IMR-90 (cell line): ENCODE measurements at regions of chr11 and their contacts with region 1.

Region 1: GRCh38 chr11:87819151-87819550 is 356.1 kb downstream of the RAB38 start:
- DNase-seq: no peak
- ATAC-seq: no peak
- H3K4me3 ChIP-seq: no peak overlapping the region
- H3K27ac ChIP-seq: no peak overlapping the region
- H3K4me1 ChIP-seq: no peaks in the 10 kb centered on the region
- H3K27me3 ChIP-seq: no peaks in the 10 kb centered on the region
- CTCF ChIP-seq: no peak
- POLR2A ChIP-seq: no peak
- RAD21 ChIP-seq: no peak

Region 2: DNA sequence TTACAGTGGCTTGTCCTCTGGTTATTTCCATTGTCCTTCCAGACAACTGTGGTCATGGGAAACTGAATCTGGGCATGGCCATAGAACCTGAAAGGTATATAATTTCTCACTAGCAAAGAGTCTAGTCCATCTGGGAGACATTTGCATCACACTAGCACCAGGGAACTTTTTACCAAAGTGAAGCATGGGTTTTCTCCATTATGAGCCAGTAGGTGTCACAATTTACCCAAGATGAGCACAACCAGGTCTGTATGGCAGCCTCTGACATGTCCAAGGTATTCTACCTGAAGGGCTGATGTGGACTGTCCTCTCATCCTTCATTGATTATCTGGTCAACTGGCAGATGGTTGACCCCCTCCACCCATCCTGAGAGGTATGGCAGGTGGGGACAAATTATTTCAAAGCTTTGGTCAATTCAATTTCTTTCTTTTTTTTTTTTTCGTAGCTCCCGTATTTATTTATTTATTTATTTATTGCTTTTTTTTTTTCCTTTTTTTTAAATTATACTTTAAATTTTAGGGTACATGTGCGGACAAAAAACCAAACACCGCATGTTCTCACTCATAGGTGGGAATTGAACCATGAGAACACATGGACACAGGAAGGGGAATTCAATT is 355.6 kb before region 1 on chr11:
- CTCF ChIA-PET with region 1: no interaction called
- POLR2A ChIA-PET with region 1: no interaction called
- dilution Hi-C with region 1: no loop called
- in situ Hi-C with region 1: no loop called
- intact Hi-C with region 1: loop called (anchors 10 kb)
- DNase-seq: peak; percentile 36
- ATAC-seq: 0 out of 2 replicates have a peak, but pooled peaks have one; percentile 51
- H3K4me3 ChIP-seq: no peak overlapping the region
- H3K27ac ChIP-seq: no peak overlapping the region
- H3K4me1 ChIP-seq: no peaks in the 10 kb centered on the region
- H3K27me3 ChIP-seq: no peaks in the 10 kb centered on the region
- CTCF ChIP-seq: peak; percentile 47
- POLR2A ChIP-seq: no peak
- RAD21 ChIP-seq: peak; percentile 60

Region 3: GRCh38 chr11:87754685-87755084 is 64.5 kb before region 1 on chr11:
- CTCF ChIA-PET with region 1: no interaction called
- POLR2A ChIA-PET with region 1: no interaction called
- dilution Hi-C with region 1: no loop called
- in situ Hi-C with region 1: no loop called
- intact Hi-C with region 1: no loop called
- DNase-seq: no peak
- ATAC-seq: no peak
- H3K4me3 ChIP-seq: no peak overlapping the region
- H3K27ac ChIP-seq: no peak overlapping the region
- H3K4me1 ChIP-seq: no peaks in the 10 kb centered on the region
- H3K27me3 ChIP-seq: no peaks in the 10 kb centered on the region
- CTCF ChIP-seq: no peak
- POLR2A ChIP-seq: no peak
- RAD21 ChIP-seq: no peak

Region 4: DNA sequence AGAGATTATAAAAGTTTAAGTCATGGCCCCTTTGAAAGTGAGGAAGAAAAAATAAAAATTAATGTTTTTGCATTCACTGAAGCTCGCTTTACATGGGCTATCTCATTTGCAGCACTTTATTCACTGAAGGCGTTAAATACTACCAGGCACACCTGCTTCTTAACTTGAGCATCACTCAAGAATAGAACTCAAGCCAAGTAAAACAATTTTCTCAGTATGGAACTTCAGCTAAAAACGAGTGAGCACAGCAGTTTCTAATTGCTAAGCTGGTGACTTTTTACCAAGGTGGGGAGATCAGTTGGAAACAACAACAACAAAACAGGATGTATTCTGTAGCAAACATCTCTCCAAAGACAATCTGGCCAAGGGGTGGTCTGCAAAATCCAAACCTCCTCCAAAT is 49.5 kb before region 1 on chr11:
- CTCF ChIA-PET with region 1: no interaction called
- POLR2A ChIA-PET with region 1: no interaction called
- dilution Hi-C with region 1: no loop called
- in situ Hi-C with region 1: no loop called
- intact Hi-C with region 1: loop called (anchors 5 kb)
- DNase-seq: no peak
- ATAC-seq: no peak
- H3K4me3 ChIP-seq: no peak overlapping the region
- H3K27ac ChIP-seq: no peak overlapping the region
- H3K4me1 ChIP-seq: no peaks in the 10 kb centered on the region
- H3K27me3 ChIP-seq: no peaks in the 10 kb centered on the region
- CTCF ChIP-seq: no peak
- POLR2A ChIP-seq: no peak
- RAD21 ChIP-seq: no peak

Region 5: GRCh38 chr11:88103337-88104206 is 284.4 kb after region 1 on chr11:
- CTCF ChIA-PET with region 1: no interaction called
- POLR2A ChIA-PET with region 1: no interaction called
- dilution Hi-C with region 1: no loop called
- in situ Hi-C with region 1: no loop called
- intact Hi-C with region 1: no loop called
- DNase-seq: peak; percentile 58
- ATAC-seq: peak; percentile 61
- H3K4me3 ChIP-seq: no peak overlapping the region
- H3K27ac ChIP-seq: no peak overlapping the region
- H3K4me1 ChIP-seq: no peaks in the 10 kb centered on the region
- H3K27me3 ChIP-seq: no peaks in the 10 kb centered on the region
- CTCF ChIP-seq: peak; percentile 56
- POLR2A ChIP-seq: no peak
- RAD21 ChIP-seq: peak; percentile 48; the same call in 1 of the 2 replicates